ENCODE measurements at regions of chr7 and their contacts with region 1.

Region 1: DNA sequence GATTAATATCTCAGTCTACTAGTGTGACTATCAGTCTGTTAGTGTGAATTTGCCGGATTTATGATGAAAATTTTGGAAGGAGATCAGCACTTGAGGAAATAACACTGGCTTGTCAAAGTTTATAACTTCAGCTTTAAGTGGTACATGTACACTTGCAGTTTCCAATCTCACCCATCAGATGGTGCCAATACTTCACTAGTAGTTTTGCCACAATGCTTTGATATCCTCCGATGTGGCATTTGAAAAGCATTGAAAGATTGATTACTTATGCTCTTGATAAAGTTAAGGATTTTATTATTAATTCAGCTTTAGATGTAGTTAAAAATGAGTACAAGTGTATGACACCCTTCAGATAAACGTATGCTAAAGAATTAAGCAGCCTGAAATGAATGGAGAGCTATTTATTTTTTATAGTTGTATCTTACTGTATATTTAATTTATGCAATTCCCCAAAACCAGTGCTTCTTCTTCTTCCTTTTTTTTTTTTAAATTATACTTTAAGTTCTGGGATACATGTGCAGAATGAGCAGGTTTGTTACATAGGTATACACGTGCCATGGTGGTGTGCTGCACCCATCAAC is 98.2 kb downstream of the ANLN start:
- DNase-seq: peak in 1 of 2 donors; percentile 49
- H3K4me3 ChIP-seq: no peak overlapping the region
- CTCF ChIP-seq: no peak
- POLR2A ChIP-seq: no peak

Region 2: GRCh38 chr7:36448781-36449379 is 39.0 kb before region 1 on chr7:
- intact Hi-C with region 1: no loop called
- DNase-seq: no peak
- H3K4me3 ChIP-seq: no peak overlapping the region
- CTCF ChIP-seq: no peak
- POLR2A ChIP-seq: no peak

Region 3: GRCh38 chr7:37198906-37199485 is 711.1 kb after region 1 on chr7:
- intact Hi-C with region 1: loop called (anchors 10 kb)
- DNase-seq: peak; percentile 59 to 93
- H3K4me3 ChIP-seq: no peak overlapping the region
- CTCF ChIP-seq: peak in 1 of 3 donors; percentile 30
- POLR2A ChIP-seq: no peak

Measured in lower leg skin (tissue), 4 donors.